ENCODE measurements at regions of chr13 and their contacts with region 1.

Region 1: DNA sequence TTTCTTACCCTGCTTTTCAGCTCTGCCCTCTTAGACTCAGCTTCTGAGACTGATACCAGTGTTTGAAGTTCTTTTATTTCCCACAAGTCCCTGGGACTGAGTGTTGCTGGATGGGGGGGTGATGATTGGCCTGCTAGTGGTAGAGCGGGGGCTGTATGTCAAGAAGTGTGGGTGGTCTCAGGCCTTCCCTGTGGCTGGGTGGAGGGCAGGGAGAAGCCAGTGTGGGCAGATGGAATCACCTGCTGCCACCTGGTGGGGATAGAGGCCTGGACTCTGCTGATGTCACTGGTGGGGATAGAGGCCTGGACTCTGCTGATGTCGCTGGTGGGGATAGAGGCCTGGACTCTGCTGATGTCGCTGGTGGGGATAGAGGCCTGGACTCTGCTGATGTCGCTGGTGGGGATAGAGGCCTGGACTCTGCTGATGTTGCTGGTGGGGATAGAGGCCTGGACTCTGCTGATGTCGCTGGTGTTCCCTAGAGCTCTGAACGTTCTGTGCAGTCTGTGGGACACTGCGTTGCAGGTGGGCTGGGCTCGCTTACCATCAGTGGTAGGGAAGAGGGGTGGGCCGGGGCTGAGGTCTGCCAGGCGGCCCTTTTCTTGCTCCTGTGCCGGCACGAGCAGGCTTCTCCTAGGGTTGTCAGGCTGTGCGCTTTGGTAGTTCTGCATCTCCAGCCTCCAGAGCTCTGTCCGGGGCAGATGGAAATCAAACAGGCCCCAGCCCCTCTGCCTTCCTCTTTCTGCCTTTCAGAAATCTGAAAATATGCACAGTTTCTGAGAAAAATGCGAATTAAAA is 101.3 kb downstream of the ARHGEF7 start:
- DNase-seq: peak; percentile 18 to 69 (median 46)
- ATAC-seq: peak; percentile 68
- H3K4me3 ChIP-seq: no peak overlapping the region
- H3K4me3 Mint-ChIP-seq: no peak overlapping the region
- H3K27ac ChIP-seq: no peak overlapping the region
- H3K27ac Mint-ChIP-seq: peak overlapping the region; percentile 60
- H3K4me1 ChIP-seq: no peaks in the 10 kb centered on the region
- H3K4me1 Mint-ChIP-seq: peaks cover 53% of the 10 kb centered on the region
- H3K27me3 ChIP-seq: no peaks in the 10 kb centered on the region
- H3K27me3 Mint-ChIP-seq: no peaks in the 10 kb centered on the region
- CTCF ChIP-seq: peak; percentile 39

Region 2: DNA sequence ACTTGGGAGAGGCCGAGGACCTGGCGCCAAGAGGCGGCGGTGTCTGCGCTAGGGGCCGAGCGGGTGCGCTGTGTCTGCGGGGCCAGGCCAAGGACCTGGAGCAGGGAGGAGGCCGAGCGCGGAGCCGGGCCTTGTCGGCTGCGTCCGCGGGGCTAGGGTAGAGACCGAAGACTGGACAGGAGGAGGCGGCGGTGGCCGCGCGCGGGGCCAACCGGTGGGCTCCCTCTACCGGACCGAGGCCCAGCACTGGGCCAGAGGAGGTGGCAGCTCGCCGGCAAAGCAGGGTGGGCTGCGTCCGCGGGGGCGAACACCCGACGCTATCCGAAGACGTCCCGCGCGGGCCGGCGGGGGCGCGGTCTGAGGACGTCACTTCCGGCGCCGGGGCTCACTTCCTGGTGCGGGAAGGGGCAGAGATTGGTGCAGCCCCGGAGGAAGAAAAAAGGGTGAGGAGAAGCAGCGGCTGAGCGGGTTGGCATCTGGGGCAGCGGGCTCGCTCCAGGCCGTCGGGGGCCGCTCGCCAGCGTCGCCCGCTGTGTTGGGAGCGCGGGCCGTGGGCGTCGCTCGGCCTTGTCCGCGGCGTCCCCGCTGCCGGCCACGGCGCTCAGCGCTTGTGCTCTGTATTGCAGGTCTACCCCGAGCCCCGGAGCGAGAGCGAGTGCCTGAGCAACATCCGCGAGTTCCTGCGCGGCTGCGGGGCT is 62.9 kb before region 1 on chr13:
- CTCF ChIA-PET with region 1: interaction called, 4 read pairs
- POLR2A ChIA-PET with region 1: no interaction called
- intact Hi-C with region 1: loop called (anchors 1 to 2 kb)
- DNase-seq: peak; percentile 86 to 96 (median 94)
- ATAC-seq: peak; percentile 81
- H3K4me3 ChIP-seq: peak overlapping the region; percentile 67 to 96
- H3K4me3 Mint-ChIP-seq: peak overlapping the region; percentile 96
- H3K27ac ChIP-seq: peak overlapping the region; percentile 75 to 79
- H3K27ac Mint-ChIP-seq: peak overlapping the region; percentile 96
- H3K4me1 ChIP-seq: peaks cover 20% of the 10 kb centered on the region
- H3K4me1 Mint-ChIP-seq: peaks cover 34% of the 10 kb centered on the region
- H3K27me3 ChIP-seq: no peaks in the 10 kb centered on the region
- H3K27me3 Mint-ChIP-seq: no peaks in the 10 kb centered on the region
- CTCF ChIP-seq: no peak

Region 3: DNA sequence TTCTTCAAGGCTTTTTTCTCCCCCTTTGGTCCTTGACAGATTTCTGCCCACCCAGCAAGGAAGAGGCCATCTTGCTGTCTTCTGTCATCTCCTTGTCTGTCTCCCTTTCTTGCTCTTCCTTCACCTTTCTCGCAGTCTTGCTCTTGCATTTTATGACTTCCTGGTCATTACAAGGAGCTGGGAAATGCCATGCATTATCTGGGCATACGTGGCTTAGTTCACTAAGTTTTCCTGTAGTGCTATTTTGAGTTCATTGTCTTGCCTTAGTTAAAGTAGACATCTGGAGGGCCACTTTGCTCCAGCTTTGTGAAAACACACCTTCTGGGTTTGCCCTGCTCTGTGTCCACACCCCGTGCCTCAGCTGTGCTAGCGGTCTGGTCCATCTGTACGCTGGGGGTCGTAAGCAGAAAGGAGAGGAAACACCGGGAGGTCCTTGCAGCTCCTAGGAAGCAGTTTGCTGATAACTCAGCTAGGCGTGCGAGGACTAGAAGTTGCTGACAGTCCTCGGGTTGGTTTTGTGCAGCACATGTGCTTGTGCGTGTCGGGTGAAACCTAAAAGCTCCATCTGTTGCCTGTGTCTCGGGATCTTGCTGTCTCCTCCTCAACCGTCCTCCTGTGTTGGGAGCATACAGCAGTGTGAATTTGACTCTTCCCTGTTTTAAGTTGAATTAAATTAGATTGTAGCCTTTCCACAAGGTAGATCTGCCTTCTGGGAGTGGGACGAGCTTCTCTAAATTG is 41.8 kb before region 1 on chr13:
- CTCF ChIA-PET with region 1: interaction called, 5 read pairs
- POLR2A ChIA-PET with region 1: no interaction called
- intact Hi-C with region 1: loop called in 1 of 2 experiments (anchors 2 kb)
- DNase-seq: no peak
- ATAC-seq: no peak
- H3K4me3 ChIP-seq: no peak overlapping the region
- H3K4me3 Mint-ChIP-seq: no peak overlapping the region
- H3K27ac ChIP-seq: no peak overlapping the region
- H3K27ac Mint-ChIP-seq: peak overlapping the region; percentile 23
- H3K4me1 ChIP-seq: peaks cover 44% of the 10 kb centered on the region
- H3K4me1 Mint-ChIP-seq: peaks cover 78% of the 10 kb centered on the region
- H3K27me3 ChIP-seq: no peaks in the 10 kb centered on the region
- H3K27me3 Mint-ChIP-seq: no peaks in the 10 kb centered on the region
- CTCF ChIP-seq: no peak

Region 4: DNA sequence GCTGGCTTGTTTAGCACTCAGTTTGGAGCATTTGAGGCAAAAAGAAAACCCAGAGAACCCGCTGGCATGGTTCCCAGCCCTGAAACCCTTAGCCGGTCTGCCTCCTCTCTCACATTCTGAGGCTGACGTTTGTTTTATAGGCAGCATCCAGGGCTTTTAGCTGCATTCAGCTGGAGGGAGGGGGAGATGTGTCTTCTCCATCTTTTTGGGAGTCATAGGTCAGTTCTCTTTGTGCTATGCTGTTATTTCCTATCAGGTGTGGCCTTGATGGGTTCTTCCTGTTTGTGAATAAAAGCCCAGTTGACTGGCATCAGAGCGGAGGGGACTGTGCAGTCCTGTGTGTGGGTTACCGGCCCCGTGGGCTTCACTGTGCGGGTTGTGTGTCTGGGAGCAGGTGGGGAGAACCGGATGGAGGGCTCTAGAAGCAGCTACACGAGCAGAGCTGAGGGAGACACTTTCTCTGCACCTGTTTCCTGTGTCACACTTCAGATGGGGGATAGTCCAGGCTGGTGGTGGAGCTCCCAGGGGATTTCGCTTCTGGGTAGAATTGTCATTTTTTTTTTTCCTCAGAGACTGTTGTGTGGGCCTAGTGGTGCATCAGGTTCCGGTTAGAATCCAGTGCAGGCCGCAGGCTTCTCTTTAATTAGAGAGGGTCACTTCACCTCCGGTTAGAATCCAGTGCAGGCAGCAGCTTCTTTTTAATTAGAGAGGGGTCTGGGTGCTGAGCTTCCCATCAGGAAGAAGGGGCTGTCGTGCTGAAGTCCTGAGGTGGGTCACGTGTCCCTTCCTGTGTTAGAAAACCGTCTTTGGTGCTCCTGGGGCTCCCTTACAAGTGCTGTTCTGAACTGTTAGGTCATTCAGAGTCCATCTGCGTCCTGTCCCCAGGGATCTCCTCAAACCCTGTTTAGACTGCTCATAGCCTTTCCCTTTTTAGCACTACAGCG is 31.6 kb before region 1 on chr13:
- CTCF ChIA-PET with region 1: interaction called, 5 read pairs
- POLR2A ChIA-PET with region 1: no interaction called
- intact Hi-C with region 1: loop called in 1 of 2 experiments (anchors 1 kb)
- DNase-seq: peak in 8 of 9 experiments; percentile 43 to 82 (median 66)
- ATAC-seq: peak; percentile 48
- H3K4me3 ChIP-seq: peak overlapping the region; percentile 5 to 22
- H3K4me3 Mint-ChIP-seq: peak overlapping the region; percentile 75
- H3K27ac ChIP-seq: peak overlapping the region; percentile 42 to 48
- H3K27ac Mint-ChIP-seq: peak overlapping the region; percentile 95
- H3K4me1 ChIP-seq: peaks cover 93% of the 10 kb centered on the region
- H3K4me1 Mint-ChIP-seq: peaks cover 100% of the 10 kb centered on the region
- H3K27me3 ChIP-seq: no peaks in the 10 kb centered on the region
- H3K27me3 Mint-ChIP-seq: no peaks in the 10 kb centered on the region
- CTCF ChIP-seq: no peak

Region 5: DNA sequence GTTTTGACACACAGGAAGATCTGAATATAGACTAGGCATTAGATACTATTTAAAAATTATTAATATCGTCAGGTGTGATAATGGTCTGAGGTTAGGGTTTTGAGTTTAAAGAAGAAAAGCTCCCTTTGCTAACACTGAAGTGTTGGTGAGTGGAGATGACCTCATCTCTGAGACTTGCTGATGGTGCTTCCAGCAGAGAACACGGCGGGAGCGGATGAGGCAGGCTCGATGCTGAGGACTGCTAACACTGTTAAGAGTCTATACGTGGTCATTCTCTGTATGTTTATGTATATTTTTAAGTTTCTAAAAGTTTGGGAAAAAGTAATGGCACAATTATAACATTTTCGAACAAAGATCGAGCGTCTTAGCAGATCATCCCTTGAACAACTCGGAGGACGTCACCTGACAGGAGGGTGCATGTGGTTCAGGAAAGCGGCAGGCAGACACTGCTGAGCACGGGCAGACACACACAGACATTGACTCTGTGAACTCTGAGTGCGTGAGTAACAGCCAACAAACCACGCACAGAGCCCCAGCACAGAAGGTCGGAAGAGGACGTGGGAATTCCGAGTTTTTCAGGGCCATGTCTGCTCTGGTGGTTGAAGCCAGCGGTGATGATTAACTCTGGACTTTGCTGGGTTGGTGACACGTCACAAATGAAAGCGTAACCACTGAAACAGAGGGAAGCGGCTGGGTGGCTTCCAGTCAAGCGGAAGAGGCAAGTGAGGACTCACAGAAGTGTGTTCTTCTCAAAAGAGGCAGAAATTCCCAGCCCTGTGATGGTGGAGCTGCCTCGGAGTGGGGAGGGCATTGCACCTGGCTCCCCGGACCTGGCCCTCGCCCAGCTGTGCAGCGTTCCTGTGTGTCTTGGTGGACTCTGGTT is 12.1 kb after region 1 on chr13:
- CTCF ChIA-PET with region 1: interaction called, 11 read pairs
- POLR2A ChIA-PET with region 1: no interaction called
- intact Hi-C with region 1: no loop called
- DNase-seq: no peak
- ATAC-seq: no peak
- H3K4me3 ChIP-seq: no peak overlapping the region
- H3K4me3 Mint-ChIP-seq: no peak overlapping the region
- H3K27ac ChIP-seq: no peak overlapping the region
- H3K27ac Mint-ChIP-seq: no peak overlapping the region
- H3K4me1 ChIP-seq: peaks cover 9% of the 10 kb centered on the region
- H3K4me1 Mint-ChIP-seq: peaks cover 46% of the 10 kb centered on the region
- H3K27me3 ChIP-seq: no peaks in the 10 kb centered on the region
- H3K27me3 Mint-ChIP-seq: no peaks in the 10 kb centered on the region
- CTCF ChIP-seq: no peak